ENCODE measurements at regions of chr5 and their contacts with region 1.

Region 1: GRCh38 chr5:16489322-16489791 is 23.8 kb upstream of the ZNF622 start:
- DNase-seq: peak; percentile 23
- H3K4me3 Mint-ChIP-seq: no peak overlapping the region
- H3K27ac Mint-ChIP-seq: no peak overlapping the region
- H3K4me1 Mint-ChIP-seq: peaks cover 40% of the 10 kb centered on the region
- H3K27me3 Mint-ChIP-seq: no peaks in the 10 kb centered on the region
- CTCF ChIP-seq: peak; percentile 32

Region 2: DNA sequence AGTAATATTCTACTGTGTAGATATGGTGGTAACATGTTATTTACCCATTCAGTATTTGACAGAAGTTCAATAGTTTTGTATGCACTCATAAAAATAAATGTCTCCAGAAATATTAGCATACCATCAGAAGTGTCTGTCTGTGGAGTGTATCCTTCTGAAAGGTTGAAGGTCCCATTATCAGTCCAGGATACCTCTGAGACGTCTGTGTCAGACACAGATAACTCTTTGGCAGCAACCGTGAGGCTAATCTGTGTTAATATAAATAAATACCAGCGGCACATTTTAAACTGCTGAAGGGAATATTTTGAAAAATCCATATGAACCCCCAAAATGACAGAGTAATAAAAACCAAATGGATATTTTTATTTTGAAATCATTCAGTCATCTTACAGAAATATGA is 11.8 kb before region 1 on chr5:
- CTCF ChIA-PET with region 1: no interaction called
- intact Hi-C with region 1: no loop called
- DNase-seq: no peak
- H3K4me3 Mint-ChIP-seq: no peak overlapping the region
- H3K27ac Mint-ChIP-seq: no peak overlapping the region
- H3K4me1 Mint-ChIP-seq: no peaks in the 10 kb centered on the region
- H3K27me3 Mint-ChIP-seq: no peaks in the 10 kb centered on the region
- CTCF ChIP-seq: no peak

Region 3: DNA sequence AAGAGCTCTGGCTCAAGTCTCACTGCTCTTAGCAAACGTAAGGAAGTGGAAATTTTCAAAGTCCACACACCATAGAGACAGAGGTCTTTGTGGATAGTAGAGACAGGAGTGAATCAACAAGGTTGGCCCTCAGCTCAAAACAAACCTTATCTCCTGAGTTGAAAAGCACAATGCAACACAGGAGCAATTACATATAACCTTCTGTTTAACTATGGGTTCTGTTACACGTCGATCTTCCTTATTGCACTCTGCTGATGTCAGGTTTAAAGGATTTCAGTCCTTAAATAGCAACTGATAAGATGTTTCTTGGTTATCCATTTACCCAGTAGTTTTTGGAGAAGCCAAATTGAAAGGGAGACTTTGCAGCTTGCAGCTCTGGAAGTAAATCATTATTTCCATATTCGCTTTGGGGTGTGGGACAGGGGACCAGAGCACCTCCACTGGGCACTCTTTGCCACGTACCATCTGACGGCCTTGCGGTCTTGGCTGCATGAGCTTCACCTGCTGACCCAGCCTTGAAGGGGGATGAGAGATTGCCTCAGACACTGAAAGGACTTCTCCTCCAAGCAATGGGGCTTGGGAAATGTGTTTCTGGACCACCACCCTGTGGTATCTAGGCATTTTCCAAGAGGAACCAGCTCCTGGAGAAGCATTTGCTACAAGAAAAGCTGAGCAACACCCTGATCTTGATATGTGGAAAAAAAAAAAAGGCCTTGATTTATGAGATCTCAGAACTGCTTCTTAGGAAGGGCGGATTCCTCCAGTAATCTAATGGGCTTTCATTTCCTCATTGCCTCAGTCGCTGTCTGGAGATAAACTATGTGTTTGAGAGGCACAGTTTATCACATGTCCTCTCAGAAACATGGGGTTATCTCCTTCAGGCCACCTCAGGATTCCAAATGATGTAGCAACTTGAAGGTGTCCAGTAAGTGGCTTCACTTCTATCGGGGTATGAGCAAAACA is 32.4 kb after region 1 on chr5:
- CTCF ChIA-PET with region 1: interaction called, 3 read pairs
- intact Hi-C with region 1: loop called (anchors 1 kb)
- DNase-seq: peak; percentile 45
- H3K4me3 Mint-ChIP-seq: peak overlapping the region; percentile 45
- H3K27ac Mint-ChIP-seq: peak overlapping the region; percentile 90
- H3K4me1 Mint-ChIP-seq: peaks cover 45% of the 10 kb centered on the region
- H3K27me3 Mint-ChIP-seq: no peaks in the 10 kb centered on the region
- CTCF ChIP-seq: no peak

Region 4: GRCh38 chr5:16552666-16553343 is 63.4 kb after region 1 on chr5:
- CTCF ChIA-PET with region 1: interaction called, 14 read pairs
- intact Hi-C with region 1: loop called (anchors 1 kb)
- DNase-seq: peak; percentile 88
- H3K4me3 Mint-ChIP-seq: no peak overlapping the region
- H3K27ac Mint-ChIP-seq: no peak overlapping the region
- H3K4me1 Mint-ChIP-seq: peaks cover 26% of the 10 kb centered on the region
- H3K27me3 Mint-ChIP-seq: no peaks in the 10 kb centered on the region
- CTCF ChIP-seq: peak; percentile 71

Region 5: DNA sequence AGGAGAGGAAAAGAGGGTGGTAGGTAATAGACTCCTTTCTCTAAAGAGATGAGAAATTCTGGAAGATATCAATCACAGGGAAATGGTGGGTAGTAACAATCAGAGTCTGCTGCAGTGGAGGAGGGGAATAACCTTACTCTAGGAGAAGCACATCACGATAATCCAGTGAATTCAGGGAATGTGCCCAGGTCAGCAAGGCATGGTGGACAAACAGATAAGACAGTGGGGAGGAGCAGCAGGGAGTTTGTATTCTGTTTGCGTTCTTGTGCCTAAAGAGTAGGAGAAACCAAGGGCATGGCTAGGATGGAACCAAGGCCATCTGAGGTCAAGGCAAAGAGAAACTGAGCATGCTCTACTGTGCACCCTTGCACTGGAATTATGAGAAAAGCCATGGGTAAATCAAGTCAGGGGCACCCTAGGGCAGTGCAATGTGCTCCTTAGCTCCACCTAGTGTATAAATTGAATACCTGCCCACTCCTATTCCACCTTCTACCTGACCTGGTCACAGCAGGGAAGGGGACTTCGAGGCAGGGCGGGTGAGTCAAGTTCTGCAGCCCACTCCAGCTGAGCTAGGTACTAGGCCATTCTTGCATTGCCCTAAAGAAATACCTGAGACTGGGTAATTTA is 95.8 kb after region 1 on chr5:
- CTCF ChIA-PET with region 1: no interaction called
- intact Hi-C with region 1: loop called (anchors 1 kb)
- DNase-seq: peak; percentile 20
- H3K4me3 Mint-ChIP-seq: no peak overlapping the region
- H3K27ac Mint-ChIP-seq: no peak overlapping the region
- H3K4me1 Mint-ChIP-seq: no peaks in the 10 kb centered on the region
- H3K27me3 Mint-ChIP-seq: peaks cover 9% of the 10 kb centered on the region
- CTCF ChIP-seq: peak; percentile 69

Region 6: DNA sequence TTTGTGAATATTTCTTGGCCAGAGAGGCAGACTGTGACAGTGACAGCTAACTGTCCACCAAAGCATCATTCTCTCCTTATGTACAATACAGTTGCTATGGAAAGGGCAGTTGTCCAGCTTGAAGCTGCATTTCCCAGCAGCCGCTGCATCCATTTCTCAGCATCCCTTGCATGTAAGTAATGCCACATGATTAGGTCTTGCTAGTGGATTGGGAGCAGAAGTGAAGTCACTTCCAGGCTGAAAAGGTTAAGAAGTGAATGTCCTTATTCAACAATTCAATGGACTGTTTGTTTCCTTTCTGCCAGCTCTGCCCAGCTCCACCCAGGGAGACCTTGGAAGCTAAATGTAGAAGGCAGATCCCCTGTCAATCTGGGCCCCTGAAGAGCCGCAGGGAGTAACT is 153.5 kb after region 1 on chr5:
- CTCF ChIA-PET with region 1: no interaction called
- intact Hi-C with region 1: no loop called
- DNase-seq: no peak
- H3K4me3 Mint-ChIP-seq: no peak overlapping the region
- H3K27ac Mint-ChIP-seq: no peak overlapping the region
- H3K4me1 Mint-ChIP-seq: no peaks in the 10 kb centered on the region
- H3K27me3 Mint-ChIP-seq: peaks cover 58% of the 10 kb centered on the region
- CTCF ChIP-seq: no peak

Region 7: GRCh38 chr5:16666883-16667398 is 177.6 kb after region 1 on chr5:
- CTCF ChIA-PET with region 1: no interaction called
- intact Hi-C with region 1: loop called (anchors 2 kb)
- DNase-seq: no peak
- H3K4me3 Mint-ChIP-seq: no peak overlapping the region
- H3K27ac Mint-ChIP-seq: peak overlapping the region; percentile 25
- H3K4me1 Mint-ChIP-seq: no peaks in the 10 kb centered on the region
- H3K27me3 Mint-ChIP-seq: no peaks in the 10 kb centered on the region
- CTCF ChIP-seq: no peak

Region 8: DNA sequence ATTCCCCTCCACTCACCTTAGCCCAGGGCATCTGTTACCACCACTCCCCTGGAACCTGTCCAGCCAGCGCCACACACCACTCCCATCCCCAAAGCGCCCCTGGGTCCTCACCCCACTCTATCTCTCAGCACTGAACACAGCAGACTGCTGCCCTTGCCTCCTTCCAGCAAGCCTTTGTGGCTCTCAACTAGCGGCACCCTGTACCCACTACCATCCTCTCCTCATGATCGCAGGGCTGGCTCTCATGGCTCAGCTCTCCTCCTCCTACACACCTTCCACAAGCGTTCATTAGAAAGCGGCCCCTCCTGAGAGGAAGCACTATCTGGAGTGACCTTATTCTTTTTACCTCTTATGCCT is 714.8 kb after region 1 on chr5:
- CTCF ChIA-PET with region 1: no interaction called
- intact Hi-C with region 1: loop called (anchors 2 kb)
- DNase-seq: no peak
- H3K4me3 Mint-ChIP-seq: no peak overlapping the region
- H3K27ac Mint-ChIP-seq: no peak overlapping the region
- H3K4me1 Mint-ChIP-seq: peaks cover 14% of the 10 kb centered on the region
- H3K27me3 Mint-ChIP-seq: peaks cover 19% of the 10 kb centered on the region
- CTCF ChIP-seq: no peak

Measured in Calu3 (cell line).